H1 (cell line): ENCODE measurements at regions of chr14 and their contacts with region 1.

Region 1: DNA sequence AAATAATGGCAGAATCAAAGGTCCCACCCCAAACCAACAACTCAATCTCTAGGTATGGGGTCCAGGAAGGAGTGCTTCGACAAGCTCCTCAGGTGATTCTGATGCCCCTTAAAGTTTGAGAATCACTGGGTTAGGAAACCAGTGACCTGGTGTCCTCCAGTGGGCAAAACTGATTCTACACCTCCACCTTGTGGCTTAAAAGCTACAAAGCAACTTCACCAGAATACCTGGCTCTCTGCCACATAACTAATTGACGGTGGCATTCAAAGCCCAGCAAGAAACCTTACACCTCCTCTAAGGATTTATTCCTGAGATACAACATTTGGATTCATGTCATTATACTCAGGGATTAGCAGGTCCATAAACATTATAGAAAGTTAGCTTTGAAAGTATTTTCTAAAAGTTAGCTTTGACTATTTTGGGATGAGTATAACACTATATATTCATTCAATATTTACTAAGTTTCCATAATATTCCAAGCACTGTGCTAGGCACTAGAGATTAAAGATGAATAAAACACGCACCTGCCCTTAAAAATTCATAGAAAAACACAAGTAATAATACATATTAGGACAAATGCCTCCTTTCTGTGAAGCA is 45.4 kb downstream of the DCAF5 start:
- DNase-seq: no peak
- H3K4me3 ChIP-seq: no peak overlapping the region
- H3K27ac ChIP-seq: no peak overlapping the region
- H3K4me1 ChIP-seq: no peaks in the 10 kb centered on the region
- H3K27me3 ChIP-seq: no peaks in the 10 kb centered on the region
- CTCF ChIP-seq: peak in 2 of 3 experiments; percentile 83 to 91; a peak in 3 of 4 replicates
- EP300 ChIP-seq: no peak
- POLR2A ChIP-seq: no peak
- RAD21 ChIP-seq: peak; percentile 96

Region 2: GRCh38 chr14:69090187-69090789 is 17.2 kb before region 1 on chr14:
- CTCF ChIA-PET with region 1: interaction called, 16 read pairs
- POLR2A ChIA-PET with region 1: no interaction called
- DNase-seq: no peak
- H3K4me3 ChIP-seq: no peak overlapping the region
- H3K27ac ChIP-seq: no peak overlapping the region
- H3K4me1 ChIP-seq: peaks cover 3 to 11% (median 5%) of the 10 kb centered on the region in 4 experiments; a peak in 5 of 7 replicates
- H3K27me3 ChIP-seq: no peaks in the 10 kb centered on the region
- CTCF ChIP-seq: peak; percentile 23 to 73 (median 71)
- EP300 ChIP-seq: no peak
- POLR2A ChIP-seq: no peak
- RAD21 ChIP-seq: peak; percentile 74 to 78

Region 3: GRCh38 chr14:69191340-69192111 is 84.0 kb after region 1 on chr14 and contains the start of gene EXD2:
- CTCF ChIA-PET with region 1: no interaction called
- POLR2A ChIA-PET with region 1: no interaction called
- DNase-seq: peak; percentile 87 to 92
- H3K4me3 ChIP-seq: peak within 1 kb of the TSS; percentile 63 to 86 (median 80)
- H3K27ac ChIP-seq: peak within 1 kb of the TSS; percentile 80; the same call in 1 of the 2 replicates
- H3K4me1 ChIP-seq: peaks cover 0 to 2% (median 0%) of the 10 kb centered on the region in 4 experiments; a peak in 2 of 7 replicates
- H3K27me3 ChIP-seq: no peaks in the 10 kb centered on the region
- CTCF ChIP-seq: no peak
- EP300 ChIP-seq: no peak; a peak in 1 of 3 replicates
- POLR2A ChIP-seq: peak; percentile 72 to 89
- RAD21 ChIP-seq: no peak; a peak in 1 of 4 replicates
- total RNA-seq, gene EXD2: 20.3 and 25.9 TPM in 2 replicates

Region 4: DNA sequence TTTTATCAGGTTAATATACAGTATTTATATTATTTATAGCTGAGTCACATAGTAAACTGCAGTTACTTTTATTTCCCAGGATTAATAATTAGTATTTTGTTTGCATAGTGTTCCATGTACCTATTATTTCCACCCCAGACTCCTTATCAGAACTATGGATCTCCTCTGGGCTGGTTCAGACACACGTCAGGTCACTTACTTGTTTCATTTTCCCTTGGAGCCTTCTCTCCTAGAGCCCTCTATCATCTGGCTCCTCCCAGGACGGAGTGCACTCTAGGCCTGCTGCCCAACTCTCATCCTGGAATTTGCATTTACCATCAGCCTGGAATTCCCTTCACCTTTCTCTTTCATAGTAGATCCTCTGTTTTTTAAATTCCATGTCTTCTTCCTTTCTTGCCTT is 124.0 kb after region 1 on chr14:
- CTCF ChIA-PET with region 1: no interaction called
- POLR2A ChIA-PET with region 1: no interaction called
- DNase-seq: no peak
- H3K4me3 ChIP-seq: no peak overlapping the region
- H3K27ac ChIP-seq: no peak overlapping the region
- H3K4me1 ChIP-seq: no peaks in the 10 kb centered on the region
- H3K27me3 ChIP-seq: no peaks in the 10 kb centered on the region
- CTCF ChIP-seq: no peak
- EP300 ChIP-seq: no peak
- POLR2A ChIP-seq: no peak
- RAD21 ChIP-seq: no peak